ENCODE measurements at regions of chr4 and their contacts with region 1.

Region 1: GRCh38 chr4:102826890-102827673 is at the start of gene UBE2D3:
- DNase-seq: peak; percentile 96 to 98
- ATAC-seq: peak; percentile 59 to 81 (median 64)
- H3K4me3 ChIP-seq: peak within 1 kb of the TSS; percentile 86
- H3K4me3 Mint-ChIP-seq: no peak within 1 kb of the TSS
- H3K27ac ChIP-seq: peak within 1 kb of the TSS; percentile 99
- H3K27ac Mint-ChIP-seq: no peak within 1 kb of the TSS
- H3K4me1 ChIP-seq: peaks cover 13% of the 10 kb centered on the region
- H3K4me1 Mint-ChIP-seq: peaks cover 41 to 48% of the 10 kb centered on the region in 2 donors
- H3K27me3 ChIP-seq: no peaks in the 10 kb centered on the region
- H3K27me3 Mint-ChIP-seq: no peaks in the 10 kb centered on the region
- CTCF ChIP-seq: no peak
- total RNA-seq, gene UBE2D3: 527 to 624 (median 529) TPM

Region 2: GRCh38 chr4:102344954-102345794 is 481.9 kb before region 1 on chr4 and contains the start of gene SLC39A8:
- intact Hi-C with region 1: loop called (anchors 5 kb)
- DNase-seq: peak; percentile 82 to 94
- ATAC-seq: peak; percentile 80 to 92 (median 83)
- H3K4me3 ChIP-seq: peak within 1 kb of the TSS; percentile 83
- H3K4me3 Mint-ChIP-seq: peak within 1 kb of the TSS; percentile 86
- H3K27ac ChIP-seq: peak within 1 kb of the TSS; percentile 92
- H3K27ac Mint-ChIP-seq: peak within 1 kb of the TSS; percentile 83 to 92
- H3K4me1 ChIP-seq: peaks cover 7% of the 10 kb centered on the region
- H3K4me1 Mint-ChIP-seq: peaks cover 37 to 41% of the 10 kb centered on the region in 2 donors
- H3K27me3 ChIP-seq: no peaks in the 10 kb centered on the region
- H3K27me3 Mint-ChIP-seq: peaks cover 0 to 6% of the 10 kb centered on the region in 2 donors
- CTCF ChIP-seq: peak; percentile 86
- total RNA-seq, gene SLC39A8: 18.0 to 20.0 (median 18.2) TPM

Region 3: DNA sequence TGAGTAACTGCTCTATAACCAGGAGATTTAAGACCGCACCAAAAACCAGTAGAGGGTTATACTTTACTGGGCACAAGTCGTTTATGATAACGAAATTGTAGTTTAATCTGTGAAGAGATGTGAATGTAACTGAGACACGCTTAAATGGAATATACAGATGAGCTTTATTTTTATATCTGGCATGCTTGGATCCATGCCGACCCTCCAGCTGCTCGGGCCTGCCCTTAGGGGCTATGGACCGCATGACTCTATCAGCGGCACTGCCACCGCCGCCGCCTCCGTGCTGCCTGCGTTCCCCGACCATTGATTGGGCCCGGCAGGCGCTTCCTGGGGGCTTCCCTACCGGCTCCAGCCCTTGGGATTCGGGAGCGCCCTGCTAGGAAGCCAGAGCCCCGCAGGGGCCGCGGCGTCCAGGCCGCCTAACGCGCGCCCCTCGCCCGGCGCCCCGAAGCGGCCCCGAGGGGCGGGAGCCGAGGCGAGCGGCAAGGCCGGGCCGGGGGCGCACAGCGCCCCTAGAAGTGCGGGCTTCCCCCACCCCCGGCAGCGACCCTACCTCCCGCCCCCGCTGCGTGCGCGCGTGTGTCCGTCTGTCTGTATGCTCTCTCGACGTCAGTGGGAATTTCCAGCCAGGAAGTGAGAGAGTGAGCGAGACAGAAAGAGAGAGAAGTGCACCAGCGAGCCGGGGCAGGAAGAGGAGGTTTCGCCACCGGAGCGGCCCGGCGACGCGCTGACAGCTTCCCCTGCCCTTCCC is 326.2 kb before region 1 on chr4 and contains the start of gene NFKB1:
- intact Hi-C with region 1: loop called (anchors 2 kb)
- DNase-seq: peak; percentile 84 to 96
- ATAC-seq: peak; percentile 71 to 86 (median 78)
- H3K4me3 ChIP-seq: peak within 1 kb of the TSS; percentile 95
- H3K4me3 Mint-ChIP-seq: peak within 1 kb of the TSS; percentile 96
- H3K27ac ChIP-seq: peak within 1 kb of the TSS; percentile 99
- H3K27ac Mint-ChIP-seq: peak within 1 kb of the TSS; percentile 97
- H3K4me1 ChIP-seq: peaks cover 11% of the 10 kb centered on the region
- H3K4me1 Mint-ChIP-seq: peaks cover 36 to 41% of the 10 kb centered on the region in 2 donors
- H3K27me3 ChIP-seq: no peaks in the 10 kb centered on the region
- H3K27me3 Mint-ChIP-seq: peaks cover 0 to 7% of the 10 kb centered on the region in 2 donors
- CTCF ChIP-seq: no peak
- total RNA-seq, gene NFKB1: 144 to 235 (median 163) TPM

Region 4: DNA sequence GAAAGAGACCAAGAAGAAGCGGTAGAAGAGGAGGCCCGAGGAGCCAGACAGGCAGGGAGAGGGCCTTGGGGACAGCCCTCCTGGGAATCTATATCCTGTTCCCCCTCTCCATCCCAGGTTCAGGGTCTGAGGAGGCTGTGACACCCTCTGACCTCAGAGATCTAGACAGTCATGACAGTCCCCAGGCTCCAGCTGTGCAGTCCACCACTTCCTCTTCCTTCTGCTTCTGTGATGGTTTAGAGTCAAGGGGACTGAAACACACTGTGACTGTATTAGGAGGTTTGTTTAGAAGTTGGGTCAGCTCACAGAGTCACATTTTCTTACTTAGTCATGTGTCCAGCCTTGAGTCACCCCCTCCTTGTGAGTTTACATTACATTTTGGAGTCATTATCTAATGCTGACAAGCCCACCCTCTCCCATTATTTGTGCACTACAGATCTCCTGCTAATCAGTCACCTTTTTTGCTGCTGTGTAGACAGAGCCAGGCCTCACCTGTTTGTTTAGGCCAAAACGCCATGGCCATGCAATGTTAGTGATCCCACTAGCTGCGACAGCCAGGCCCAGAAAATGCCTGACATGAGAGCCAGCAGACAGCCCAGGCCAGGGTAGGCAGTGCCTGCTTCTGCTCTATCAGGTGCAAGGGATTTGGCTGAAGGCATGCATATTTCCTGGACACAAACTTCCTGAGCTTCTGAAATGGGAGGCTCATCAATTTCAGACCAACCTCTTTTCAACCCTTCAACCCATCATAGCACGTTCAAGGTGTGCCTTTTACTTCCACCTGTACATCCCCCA is 92.3 kb before region 1 on chr4:
- intact Hi-C with region 1: loop called (anchors 5 kb)
- DNase-seq: peak; percentile 23 to 31
- ATAC-seq: peak; percentile 86 to 91 (median 87)
- H3K4me3 ChIP-seq: no peak overlapping the region
- H3K4me3 Mint-ChIP-seq: peak overlapping the region; percentile 68
- H3K27ac ChIP-seq: peak overlapping the region; percentile 83
- H3K27ac Mint-ChIP-seq: peak overlapping the region; percentile 95
- H3K4me1 ChIP-seq: peaks cover 14% of the 10 kb centered on the region
- H3K4me1 Mint-ChIP-seq: peaks cover 57 to 67% of the 10 kb centered on the region in 2 donors
- H3K27me3 ChIP-seq: no peaks in the 10 kb centered on the region
- H3K27me3 Mint-ChIP-seq: no peaks in the 10 kb centered on the region
- CTCF ChIP-seq: no peak

Region 5: DNA sequence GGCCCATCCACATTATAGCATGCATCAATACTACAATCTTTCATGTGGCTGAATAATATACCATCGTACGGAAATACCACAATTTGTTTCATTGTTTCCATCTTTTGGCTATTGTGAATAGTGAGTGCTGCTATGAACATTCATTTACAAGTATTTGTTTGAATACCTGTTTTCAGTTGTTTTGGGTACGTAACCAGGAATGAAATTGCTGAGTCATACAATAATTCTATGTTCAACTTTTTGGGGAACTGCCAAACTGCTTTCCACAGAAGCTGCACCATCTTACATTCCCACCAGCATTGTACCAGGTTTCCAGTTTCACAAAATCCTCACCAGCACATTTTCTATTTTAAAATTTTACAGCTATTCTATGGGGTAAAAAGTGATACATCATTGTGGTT is 37.8 kb before region 1 on chr4:
- intact Hi-C with region 1: no loop called
- DNase-seq: peak in 1 of 2 donors; percentile 18
- ATAC-seq: no peak
- H3K4me3 ChIP-seq: no peak overlapping the region
- H3K4me3 Mint-ChIP-seq: peak overlapping the region; percentile 25
- H3K27ac ChIP-seq: no peak overlapping the region
- H3K27ac Mint-ChIP-seq: peak overlapping the region; percentile 25 to 54
- H3K4me1 ChIP-seq: no peaks in the 10 kb centered on the region
- H3K4me1 Mint-ChIP-seq: peaks cover 12 to 29% of the 10 kb centered on the region in 2 donors
- H3K27me3 ChIP-seq: no peaks in the 10 kb centered on the region
- H3K27me3 Mint-ChIP-seq: no peaks in the 10 kb centered on the region
- CTCF ChIP-seq: no peak

Region 6: GRCh38 chr4:102809190-102809589 is 17.9 kb before region 1 on chr4:
- intact Hi-C with region 1: loop called (anchors 2 kb)
- DNase-seq: no peak
- ATAC-seq: peak; percentile 54 to 80 (median 58)
- H3K4me3 ChIP-seq: no peak overlapping the region
- H3K4me3 Mint-ChIP-seq: peak overlapping the region; percentile 14
- H3K27ac ChIP-seq: no peak overlapping the region
- H3K27ac Mint-ChIP-seq: peak overlapping the region; percentile 61 to 70
- H3K4me1 ChIP-seq: peaks cover 20% of the 10 kb centered on the region
- H3K4me1 Mint-ChIP-seq: peaks cover 71 to 82% of the 10 kb centered on the region in 2 donors
- H3K27me3 ChIP-seq: no peaks in the 10 kb centered on the region
- H3K27me3 Mint-ChIP-seq: no peaks in the 10 kb centered on the region
- CTCF ChIP-seq: no peak

Region 7: DNA sequence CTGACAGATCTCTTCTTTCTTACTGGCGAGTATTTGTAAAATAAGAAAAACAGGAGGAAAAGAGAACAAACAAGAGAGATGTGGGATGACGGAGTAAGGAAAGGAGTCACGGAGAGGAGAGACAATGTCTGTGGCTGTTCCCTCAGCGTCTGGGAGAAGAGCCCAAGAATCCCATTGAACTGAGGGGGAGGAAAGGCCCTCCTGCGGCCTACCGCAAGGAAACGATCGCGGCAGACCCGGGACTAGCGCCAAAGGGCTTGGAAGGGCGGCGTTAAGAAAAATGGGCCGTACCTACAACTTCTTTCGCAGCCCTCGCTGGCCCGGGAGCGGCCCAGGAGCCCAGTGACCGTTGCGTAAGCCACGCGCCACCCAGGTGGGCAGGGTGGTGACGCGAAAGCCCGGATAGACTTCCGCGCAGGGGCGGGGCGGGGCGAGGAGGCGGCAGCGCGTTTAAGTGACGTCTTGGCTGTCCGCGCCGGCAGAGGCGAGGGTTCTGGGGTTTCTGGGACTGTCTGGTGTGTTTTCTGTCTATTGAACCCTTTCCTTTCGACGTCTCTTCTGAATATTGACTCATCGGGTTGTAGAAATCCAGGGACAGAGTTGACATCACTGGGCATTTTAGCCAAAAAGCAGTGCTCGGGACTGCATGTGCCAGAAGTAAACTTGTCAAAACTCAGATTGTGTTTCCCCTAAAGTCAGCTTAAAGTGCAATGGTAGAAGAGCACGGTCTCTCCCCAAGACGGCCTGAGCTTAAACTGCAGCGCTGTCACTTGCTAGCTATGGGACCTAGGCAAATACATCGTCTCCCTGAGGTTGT is 192.4 kb after region 1 on chr4 and contains the start of gene SLC9B1:
- intact Hi-C with region 1: loop called (anchors 2 kb)
- DNase-seq: peak; percentile 92 to 95
- ATAC-seq: peak; percentile 93 to 98 (median 95)
- H3K4me3 ChIP-seq: peak within 1 kb of the TSS; percentile 61
- H3K4me3 Mint-ChIP-seq: peak within 1 kb of the TSS; percentile 94
- H3K27ac ChIP-seq: peak within 1 kb of the TSS; percentile 93
- H3K27ac Mint-ChIP-seq: peak within 1 kb of the TSS in 1 of 2 donors; percentile 95
- H3K4me1 ChIP-seq: peaks cover 20% of the 10 kb centered on the region
- H3K4me1 Mint-ChIP-seq: peaks cover 12 to 13% of the 10 kb centered on the region in 2 donors
- H3K27me3 ChIP-seq: no peaks in the 10 kb centered on the region
- H3K27me3 Mint-ChIP-seq: no peaks in the 10 kb centered on the region
- CTCF ChIP-seq: no peak
- total RNA-seq, gene SLC9B1: 2.1 to 4.0 (median 2.5) TPM